Left colon (tissue), 2 donors: ENCODE measurements at regions of chr11 and their contacts with region 1.

Region 1: GRCh38 chr11:76318744-76319384 is 62.1 kb downstream of the THAP12 start:
- DNase-seq: peak; percentile 58 to 91
- ATAC-seq: peak; percentile 89

Region 2: GRCh38 chr11:76207642-76208401 is 111.0 kb before region 1 on chr11:
- intact Hi-C with region 1: loop called (anchors 5 kb)
- DNase-seq: peak; percentile 74 to 86
- ATAC-seq: peak; percentile 62

Region 3: DNA sequence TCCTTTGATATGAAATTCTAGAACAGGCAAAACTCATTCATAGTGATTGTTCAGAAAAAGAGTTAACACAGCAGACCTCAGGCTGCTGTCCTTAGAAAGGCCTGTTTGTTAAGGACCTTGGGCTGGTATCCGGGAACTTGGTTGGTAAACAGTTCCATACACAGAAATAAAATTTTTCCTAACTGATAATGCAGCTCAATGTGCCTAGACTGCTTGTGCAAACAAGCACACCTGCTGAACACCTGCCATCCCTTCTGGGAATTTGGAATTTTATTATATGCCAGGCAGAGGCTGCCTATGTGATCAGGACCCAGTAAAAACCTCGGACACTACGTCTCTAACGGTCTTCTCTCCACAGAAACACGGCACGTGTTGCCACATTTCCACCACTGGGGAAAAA is 50.5 kb after region 1 on chr11:
- intact Hi-C with region 1: no loop called
- DNase-seq: peak; percentile 47 to 55
- ATAC-seq: peak; percentile 76